ENCODE measurements at regions of chr19 and their contacts with region 1.

Region 1: DNA sequence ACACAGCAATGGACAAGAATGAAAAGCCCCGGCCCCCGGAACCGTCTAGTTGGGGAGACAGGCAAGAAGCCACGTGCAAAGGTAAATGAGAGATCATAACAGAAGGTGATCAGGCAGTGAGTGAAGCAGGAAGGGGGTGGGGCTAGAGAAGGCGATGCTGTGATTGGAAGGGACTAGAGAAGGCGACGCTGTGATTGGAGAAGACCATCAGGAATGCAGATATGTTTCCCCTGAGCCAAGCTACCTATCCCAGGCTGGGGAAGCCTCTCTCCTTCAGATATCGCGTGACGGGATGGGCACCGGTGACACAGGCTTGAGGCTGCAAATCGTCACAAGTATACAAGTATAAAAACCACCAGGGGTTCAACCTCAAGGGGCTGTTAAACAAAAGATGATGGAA is 21.8 kb downstream of the DCAF15 start:
- DNase-seq: peak in 30 of 35 experiments; percentile 28 to 71 (median 48)
- ATAC-seq: peak; percentile 75 to 94 (median 78)
- H3K4me3 ChIP-seq: no peak overlapping the region
- H3K4me3 Mint-ChIP-seq: peak overlapping the region in 1 of 3 donors; percentile 18
- H3K27ac ChIP-seq: peak overlapping the region; percentile 6
- H3K27ac Mint-ChIP-seq: peak overlapping the region; percentile 81 to 86
- H3K4me1 ChIP-seq: peaks cover 3 to 21% of the 10 kb centered on the region in 2 experiments
- H3K4me1 Mint-ChIP-seq: peaks cover 12 to 19% (median 14%) of the 10 kb centered on the region in 3 donors
- H3K27me3 ChIP-seq: no peaks in the 10 kb centered on the region
- H3K27me3 Mint-ChIP-seq: no peaks in the 10 kb centered on the region

Region 2: DNA sequence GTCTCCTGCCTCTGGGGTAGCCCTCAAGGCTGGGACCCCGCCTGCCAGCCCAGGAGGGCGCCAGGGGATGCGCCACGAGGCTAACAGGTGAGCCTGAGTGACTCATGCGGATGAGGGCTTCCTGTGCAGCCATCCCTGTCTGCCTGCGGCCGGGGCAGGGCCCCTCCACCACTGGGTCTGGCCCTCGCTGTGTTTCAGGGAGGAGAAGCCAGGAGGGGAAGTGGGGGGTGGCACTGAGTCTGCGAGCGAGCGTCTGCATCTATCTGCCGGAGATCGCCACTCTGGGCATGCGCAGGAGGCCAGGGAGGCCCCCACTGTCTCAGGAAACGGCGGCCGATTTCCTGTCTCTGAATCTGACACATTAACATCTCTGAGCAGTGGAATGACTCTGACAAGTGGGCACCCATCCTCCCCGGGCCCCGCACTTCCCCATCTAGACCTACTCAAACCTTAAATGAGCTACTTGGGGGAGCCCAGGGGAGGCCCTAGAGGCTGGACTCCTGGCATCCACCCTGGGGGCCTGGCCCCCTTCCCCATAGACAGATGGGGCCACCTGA is 12.4 kb after region 1 on chr19:
- CTCF ChIA-PET with region 1: no interaction called
- POLR2A ChIA-PET with region 1: interaction called, 9 to 11 read pairs
- DNase-seq: peak; percentile 96 to 100 (median 98)
- ATAC-seq: peak; percentile 87 to 93 (median 92)
- H3K4me3 ChIP-seq: peak overlapping the region; percentile 11 to 25
- H3K4me3 Mint-ChIP-seq: peak overlapping the region; percentile 57 to 69 (median 61)
- H3K27ac ChIP-seq: peak overlapping the region; percentile 94
- H3K27ac Mint-ChIP-seq: peak overlapping the region; percentile 97 to 98
- H3K4me1 ChIP-seq: peaks cover 65 to 91% of the 10 kb centered on the region in 2 experiments
- H3K4me1 Mint-ChIP-seq: peaks cover 69 to 93% (median 88%) of the 10 kb centered on the region in 3 donors
- H3K27me3 ChIP-seq: no peaks in the 10 kb centered on the region
- H3K27me3 Mint-ChIP-seq: no peaks in the 10 kb centered on the region

Region 3: DNA sequence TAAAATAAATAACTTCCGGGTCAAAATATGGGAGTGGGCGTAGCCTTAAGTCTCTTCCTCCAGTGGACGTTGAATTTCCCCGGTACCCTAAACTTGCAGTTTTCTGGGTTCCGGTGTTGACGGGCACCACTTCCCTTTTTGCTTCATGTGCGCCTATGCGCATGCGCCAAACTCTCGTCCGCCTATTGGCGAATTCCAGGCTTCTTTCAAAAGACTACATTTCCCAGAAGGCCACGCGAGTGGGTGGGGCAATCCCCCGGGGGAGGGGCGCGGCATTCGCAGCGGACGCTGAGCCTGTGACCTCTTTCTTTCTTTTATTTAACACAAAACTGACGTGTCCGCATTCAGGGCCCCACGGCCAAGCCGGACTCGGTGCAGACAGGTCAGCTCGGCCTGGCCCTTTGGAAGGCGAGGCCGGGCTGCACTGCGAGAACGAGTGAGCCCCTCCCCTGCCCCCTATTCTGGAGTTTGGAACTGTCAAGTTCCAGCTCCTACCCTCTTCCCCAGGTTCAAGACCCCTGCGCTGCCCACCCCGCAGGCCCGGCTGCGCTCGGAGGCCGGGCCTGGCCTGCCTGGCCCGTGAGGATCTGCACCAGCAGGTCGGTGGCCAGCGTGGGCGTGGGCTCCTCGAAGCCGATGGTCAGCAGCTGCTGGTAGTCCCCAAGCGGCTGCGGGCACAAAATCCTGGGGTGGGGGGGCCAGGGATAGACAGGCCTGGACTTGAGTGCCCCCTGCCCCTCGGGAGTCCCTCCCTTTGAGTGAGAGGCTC is 107.4 kb after region 1 on chr19:
- CTCF ChIA-PET with region 1: interaction called in 1 of 2 experiments, 10 read pairs
- POLR2A ChIA-PET with region 1: interaction called in 1 of 2 experiments, 3 read pairs
- DNase-seq: peak; percentile 96 to 100 (median 99)
- ATAC-seq: peak; percentile 94 to 96 (median 95)
- H3K4me3 ChIP-seq: peak overlapping the region; percentile 66 to 75
- H3K4me3 Mint-ChIP-seq: peak overlapping the region; percentile 85 to 93 (median 90)
- H3K27ac ChIP-seq: peak overlapping the region; percentile 86
- H3K27ac Mint-ChIP-seq: peak overlapping the region; percentile 91 to 93
- H3K4me1 ChIP-seq: peaks cover 9 to 21% of the 10 kb centered on the region in 2 experiments
- H3K4me1 Mint-ChIP-seq: peaks cover 20 to 24% (median 21%) of the 10 kb centered on the region in 3 donors
- H3K27me3 ChIP-seq: no peaks in the 10 kb centered on the region
- H3K27me3 Mint-ChIP-seq: no peaks in the 10 kb centered on the region

Measured in T-cell (primary cell).